ENCODE measurements at regions of chr10 and their contacts with region 1.

Region 1: GRCh38 chr10:58177362-58177947 is 90.2 kb downstream of the IPMK start:
- DNase-seq: no peak
- ATAC-seq: peak; percentile 46; the same call in 2 of the 3 replicates
- H3K4me3 ChIP-seq: no peak overlapping the region
- H3K27ac ChIP-seq: no peak overlapping the region
- H3K4me1 ChIP-seq: no peaks in the 10 kb centered on the region
- H3K27me3 ChIP-seq: no peaks in the 10 kb centered on the region
- CTCF ChIP-seq: peak; percentile 37 to 65 (median 48); a peak in 5 of 6 replicates
- EP300 ChIP-seq: no peak
- POLR2A ChIP-seq: no peak
- RAD21 ChIP-seq: peak; percentile 79

Region 2: GRCh38 chr10:58152673-58153263 is 24.7 kb before region 1 on chr10:
- CTCF ChIA-PET with region 1: interaction called, 12 read pairs
- POLR2A ChIA-PET with region 1: no interaction called
- RAD21 ChIA-PET with region 1: no interaction called
- SMC1A ChIA-PET with region 1: interaction called, 3 read pairs
- in situ Hi-C with region 1: no loop called
- intact Hi-C with region 1: no loop called
- DNase-seq: no peak
- ATAC-seq: peak; percentile 70
- H3K4me3 ChIP-seq: no peak overlapping the region
- H3K27ac ChIP-seq: no peak overlapping the region
- H3K4me1 ChIP-seq: no peaks in the 10 kb centered on the region
- H3K27me3 ChIP-seq: no peaks in the 10 kb centered on the region
- CTCF ChIP-seq: peak; percentile 47 to 64 (median 57); a peak in 5 of 6 replicates
- EP300 ChIP-seq: no peak
- POLR2A ChIP-seq: no peak
- RAD21 ChIP-seq: peak; percentile 58

Region 3: DNA sequence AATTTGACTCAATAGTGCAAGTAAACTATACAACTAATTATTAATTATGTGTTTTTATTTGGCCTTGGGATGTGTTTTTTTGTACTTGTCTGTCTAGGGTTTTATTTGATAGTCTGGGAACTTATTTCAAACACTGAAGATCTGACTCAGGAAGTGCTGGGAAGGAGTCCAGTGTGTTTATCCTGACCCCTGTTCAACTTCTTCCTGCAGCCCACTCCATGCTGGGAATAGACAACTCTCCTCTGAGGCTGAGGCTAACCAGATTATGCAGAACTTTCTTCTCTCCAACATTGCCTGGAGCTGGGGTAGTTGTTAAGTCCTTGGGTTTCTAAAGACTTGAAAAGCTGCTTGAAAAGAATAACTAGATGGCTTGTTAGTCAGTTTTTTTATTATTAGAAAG is 98.5 kb after region 1 on chr10:
- CTCF ChIA-PET with region 1: interaction called, 13 read pairs
- POLR2A ChIA-PET with region 1: no interaction called
- RAD21 ChIA-PET with region 1: no interaction called
- SMC1A ChIA-PET with region 1: interaction called, 8 read pairs
- in situ Hi-C with region 1: no loop called
- intact Hi-C with region 1: no loop called
- DNase-seq: no peak
- ATAC-seq: no peak
- H3K4me3 ChIP-seq: no peak overlapping the region
- H3K27ac ChIP-seq: no peak overlapping the region
- H3K4me1 ChIP-seq: no peaks in the 10 kb centered on the region
- H3K27me3 ChIP-seq: no peaks in the 10 kb centered on the region
- CTCF ChIP-seq: no peak
- EP300 ChIP-seq: no peak
- POLR2A ChIP-seq: no peak
- RAD21 ChIP-seq: no peak

Region 4: DNA sequence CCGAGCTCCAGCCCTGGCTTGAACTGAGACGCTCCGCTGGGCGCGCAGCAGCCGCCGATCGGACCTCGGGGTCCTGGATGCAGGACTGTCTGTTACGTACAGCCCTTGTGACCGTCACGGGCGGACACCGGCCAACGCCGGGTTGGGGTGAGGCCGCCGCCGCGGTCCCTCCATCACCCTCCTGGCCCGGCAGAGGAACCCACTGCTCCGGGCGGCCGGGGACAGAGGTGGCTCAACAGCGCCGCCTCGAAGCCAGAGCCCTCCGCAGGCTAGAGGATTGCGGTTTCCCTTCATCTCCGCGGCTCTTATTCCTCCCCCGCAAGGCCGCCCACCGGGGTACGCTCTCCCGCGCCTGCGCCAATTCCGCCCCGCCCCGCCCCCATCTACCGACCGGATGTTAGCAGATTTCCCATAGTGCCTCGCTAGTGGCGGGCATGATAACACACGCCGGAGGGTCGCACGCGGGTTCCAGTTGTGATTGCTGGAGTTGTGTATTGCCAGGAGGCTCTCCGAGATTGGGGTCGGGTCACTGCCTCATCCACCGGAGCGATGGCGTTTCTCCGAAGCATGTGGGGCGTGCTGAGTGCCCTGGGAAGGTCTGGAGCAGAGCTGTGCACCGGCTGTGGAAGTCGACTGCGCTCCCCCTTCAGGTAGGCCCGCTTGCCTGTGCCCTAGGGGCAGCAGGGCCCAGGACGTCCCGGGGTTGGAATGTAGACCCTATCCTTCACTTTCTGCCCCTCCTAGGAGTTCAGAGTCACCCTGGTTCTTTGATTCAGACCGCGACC is 207.7 kb after region 1 on chr10 and contains the start of gene TFAM:
- CTCF ChIA-PET with region 1: interaction called, 5 read pairs
- POLR2A ChIA-PET with region 1: no interaction called
- RAD21 ChIA-PET with region 1: interaction called, 3 read pairs
- SMC1A ChIA-PET with region 1: interaction called, 9 read pairs
- in situ Hi-C with region 1: loop called (anchors 10 kb)
- intact Hi-C with region 1: loop called (anchors 5 kb)
- DNase-seq: peak; percentile 66
- ATAC-seq: peak; percentile 90
- H3K4me3 ChIP-seq: peak within 1 kb of the TSS; percentile 85
- H3K27ac ChIP-seq: peak within 1 kb of the TSS; percentile 88
- H3K4me1 ChIP-seq: peaks cover 5% of the 10 kb centered on the region
- H3K27me3 ChIP-seq: no peaks in the 10 kb centered on the region
- CTCF ChIP-seq: peak; percentile 49 to 67 (median 61)
- EP300 ChIP-seq: peak in 1 of 2 experiments; percentile 30; a peak in 1 of 4 replicates
- POLR2A ChIP-seq: peak; percentile 99
- RAD21 ChIP-seq: peak; percentile 70
- polyA plus RNA-seq, gene TFAM: 96.1 to 114 TPM

Measured in GM12878 (cell line).